Activated CD4-positive, alpha-beta T cell treated with anti-CD3 and anti-CD28 coated beads for 36 hours (primary cell): ENCODE measurements at regions of chr2 and their contacts with region 1.

Region 1: GRCh38 chr2:240586198-240586918 is at the start of gene CAPN10:
- DNase-seq: peak; percentile 98
- ATAC-seq: peak; percentile 91
- H3K4me3 Mint-ChIP-seq: peak within 1 kb of the TSS; percentile 87
- H3K27ac Mint-ChIP-seq: peak within 1 kb of the TSS; percentile 85
- H3K4me1 Mint-ChIP-seq: peaks cover 38% of the 10 kb centered on the region
- H3K27me3 Mint-ChIP-seq: no peaks in the 10 kb centered on the region
- total RNA-seq, gene CAPN10: 22.1 to 30.2 TPM

Region 2: DNA sequence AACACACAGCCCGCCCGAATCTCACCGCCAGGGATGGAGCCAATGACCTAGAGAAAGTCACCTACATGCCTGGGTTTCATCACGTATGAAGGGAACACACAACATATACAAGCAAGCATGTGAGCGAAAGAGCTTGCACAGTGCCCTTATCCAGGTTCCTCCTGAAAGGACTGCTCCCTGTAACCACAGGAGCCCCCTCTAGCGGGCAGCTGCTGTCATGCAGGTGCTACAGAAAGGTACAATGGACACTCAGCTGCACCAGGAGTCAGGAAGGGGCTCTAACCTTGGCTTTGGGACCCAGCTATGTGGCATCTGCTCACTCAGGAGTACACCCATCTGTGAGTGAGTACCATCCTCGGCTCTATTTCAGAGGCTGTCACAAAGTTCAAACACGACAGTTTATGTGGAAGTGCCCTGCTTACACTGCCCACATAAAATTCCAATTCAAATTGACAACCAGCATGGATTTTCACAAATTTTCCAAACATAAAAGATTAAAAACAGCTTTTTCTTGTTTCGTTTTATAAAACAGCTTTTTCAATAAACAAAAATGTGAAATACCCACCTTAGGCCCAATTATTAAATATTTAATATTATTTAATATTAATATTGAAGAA is 564.8 kb before region 1 on chr2:
- CTCF ChIA-PET with region 1: no interaction called
- POLR2A ChIA-PET with region 1: no interaction called
- intact Hi-C with region 1: loop called in 1 of 2 experiments (anchors 1 kb)
- DNase-seq: peak; percentile 83
- ATAC-seq: peak; percentile 28
- H3K4me3 Mint-ChIP-seq: no peak overlapping the region
- H3K27ac Mint-ChIP-seq: no peak overlapping the region
- H3K4me1 Mint-ChIP-seq: peaks cover 25% of the 10 kb centered on the region
- H3K27me3 Mint-ChIP-seq: no peaks in the 10 kb centered on the region

Region 3: DNA sequence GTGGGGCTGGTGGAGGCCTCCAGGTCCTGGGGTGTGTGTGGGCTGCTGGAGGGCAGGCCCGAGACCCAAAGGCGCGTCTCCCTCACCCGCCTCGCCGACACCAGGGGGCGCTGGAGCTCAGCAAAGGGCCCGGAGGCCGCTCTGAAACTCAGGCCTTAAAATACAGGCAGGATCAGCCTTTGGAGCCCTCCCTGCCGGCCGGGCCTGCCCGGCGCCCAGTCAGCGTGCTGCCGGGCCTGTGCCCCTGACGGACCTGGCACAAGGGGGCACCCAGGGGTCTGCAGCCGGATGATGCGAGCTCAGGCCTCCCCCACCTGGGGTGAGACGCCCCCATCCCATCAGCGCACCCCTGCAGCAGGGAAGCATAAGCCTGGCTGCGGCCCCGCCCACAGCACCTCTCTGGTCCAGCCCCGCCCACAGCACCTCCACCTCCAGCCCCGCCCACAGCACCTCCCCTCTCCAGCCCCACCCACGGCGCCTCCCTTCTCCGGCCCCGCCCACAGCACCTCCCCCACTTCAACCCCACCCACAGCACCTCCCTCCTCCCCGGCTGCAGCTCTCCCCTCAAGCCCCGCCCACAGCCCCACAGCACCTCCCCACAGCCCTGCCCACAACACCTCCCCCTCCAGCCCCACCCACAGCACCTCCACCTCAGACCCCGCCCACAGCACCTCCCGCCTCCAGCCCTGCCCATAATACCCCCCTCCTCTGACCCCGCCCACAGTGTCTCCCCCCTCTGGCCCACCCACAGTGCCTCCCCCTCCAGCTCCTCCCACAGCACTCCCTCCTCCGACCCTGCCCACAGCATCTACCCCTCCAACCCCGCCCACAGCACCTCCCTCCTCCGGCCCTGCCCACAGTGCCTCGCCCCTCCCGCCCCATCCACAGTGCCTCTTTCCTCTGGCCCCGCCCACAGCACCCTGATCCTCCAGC is 353.1 kb before region 1 on chr2:
- CTCF ChIA-PET with region 1: no interaction called
- POLR2A ChIA-PET with region 1: no interaction called
- intact Hi-C with region 1: loop called in 1 of 2 experiments (anchors 1 kb)
- DNase-seq: peak; percentile 88
- ATAC-seq: peak; percentile 70
- H3K4me3 Mint-ChIP-seq: no peak overlapping the region
- H3K27ac Mint-ChIP-seq: no peak overlapping the region
- H3K4me1 Mint-ChIP-seq: no peaks in the 10 kb centered on the region
- H3K27me3 Mint-ChIP-seq: peaks cover 11% of the 10 kb centered on the region

Region 4: GRCh38 chr2:240513549-240514287 is 72.6 kb before region 1 on chr2:
- CTCF ChIA-PET with region 1: interaction called, 12 read pairs
- POLR2A ChIA-PET with region 1: no interaction called
- intact Hi-C with region 1: loop called (anchors 1 kb)
- DNase-seq: peak; percentile 93
- ATAC-seq: peak; percentile 99
- H3K4me3 Mint-ChIP-seq: no peak overlapping the region
- H3K27ac Mint-ChIP-seq: peak overlapping the region; percentile 71
- H3K4me1 Mint-ChIP-seq: peaks cover 13% of the 10 kb centered on the region
- H3K27me3 Mint-ChIP-seq: no peaks in the 10 kb centered on the region

Region 5: GRCh38 chr2:240624950-240625621 is 38.7 kb after region 1 on chr2 and contains the start of gene GPR35:
- CTCF ChIA-PET with region 1: interaction called, 5 read pairs
- POLR2A ChIA-PET with region 1: interaction called, 3 read pairs
- intact Hi-C with region 1: loop called (anchors 1 kb)
- DNase-seq: peak; percentile 87
- ATAC-seq: peak; percentile 53
- H3K4me3 Mint-ChIP-seq: peak within 1 kb of the TSS; percentile 43
- H3K27ac Mint-ChIP-seq: peak within 1 kb of the TSS; percentile 84
- H3K4me1 Mint-ChIP-seq: peaks cover 52% of the 10 kb centered on the region
- H3K27me3 Mint-ChIP-seq: no peaks in the 10 kb centered on the region
- total RNA-seq, gene GPR35: 3.6 to 4.1 TPM

Region 6: GRCh38 chr2:241279413-241279812 is 693.1 kb after region 1 on chr2:
- CTCF ChIA-PET with region 1: no interaction called
- POLR2A ChIA-PET with region 1: no interaction called
- intact Hi-C with region 1: no loop called
- DNase-seq: no peak
- ATAC-seq: no peak
- H3K4me3 Mint-ChIP-seq: no peak overlapping the region
- H3K27ac Mint-ChIP-seq: no peak overlapping the region
- H3K4me1 Mint-ChIP-seq: peaks cover 27% of the 10 kb centered on the region
- H3K27me3 Mint-ChIP-seq: no peaks in the 10 kb centered on the region

Region 7: GRCh38 chr2:241609859-241610793 is 1023.8 kb after region 1 on chr2:
- CTCF ChIA-PET with region 1: no interaction called
- POLR2A ChIA-PET with region 1: no interaction called
- intact Hi-C with region 1: loop called in 1 of 2 experiments (anchors 1 kb)
- DNase-seq: peak; percentile 96
- ATAC-seq: peak; percentile 100
- H3K4me3 Mint-ChIP-seq: peak overlapping the region; percentile 48
- H3K27ac Mint-ChIP-seq: peak overlapping the region; percentile 67
- H3K4me1 Mint-ChIP-seq: peaks cover 14% of the 10 kb centered on the region
- H3K27me3 Mint-ChIP-seq: no peaks in the 10 kb centered on the region